B cell (primary cell): ENCODE measurements at regions of chr5 and their contacts with region 1.

Region 1: GRCh38 chr5:180470966-180471582 is 23.1 kb upstream of the CNOT6 start:
- DNase-seq: peak; percentile 72
- ATAC-seq: peak; percentile 83
- H3K4me3 ChIP-seq: no peak overlapping the region
- H3K4me3 Mint-ChIP-seq: no peak overlapping the region
- H3K27ac ChIP-seq: no peak overlapping the region
- H3K27ac Mint-ChIP-seq: no peak overlapping the region
- H3K4me1 ChIP-seq: peaks cover 0 to 7% of the 10 kb centered on the region in 2 donors
- H3K4me1 Mint-ChIP-seq: no peaks in the 10 kb centered on the region
- H3K27me3 ChIP-seq: peaks cover 0 to 11% (median 3%) of the 10 kb centered on the region in 4 experiments
- H3K27me3 Mint-ChIP-seq: peaks cover 10% of the 10 kb centered on the region
- CTCF ChIP-seq: peak; percentile 94

Region 2: GRCh38 chr5:179526978-179527377 is 944.1 kb before region 1 on chr5:
- CTCF ChIA-PET with region 1: no interaction called
- POLR2A ChIA-PET with region 1: no interaction called
- intact Hi-C with region 1: no loop called
- DNase-seq: no peak
- ATAC-seq: no peak
- H3K4me3 ChIP-seq: no peak overlapping the region
- H3K4me3 Mint-ChIP-seq: no peak overlapping the region
- H3K27ac ChIP-seq: no peak overlapping the region
- H3K27ac Mint-ChIP-seq: no peak overlapping the region
- H3K4me1 ChIP-seq: peaks cover 0 to 9% of the 10 kb centered on the region in 2 donors
- H3K4me1 Mint-ChIP-seq: peaks cover 19% of the 10 kb centered on the region
- H3K27me3 ChIP-seq: no peaks in the 10 kb centered on the region
- H3K27me3 Mint-ChIP-seq: no peaks in the 10 kb centered on the region
- CTCF ChIP-seq: no peak

Region 3: GRCh38 chr5:180233729-180234128 is 237.3 kb before region 1 on chr5:
- CTCF ChIA-PET with region 1: no interaction called
- POLR2A ChIA-PET with region 1: no interaction called
- intact Hi-C with region 1: no loop called
- DNase-seq: no peak
- ATAC-seq: no peak
- H3K4me3 ChIP-seq: no peak overlapping the region
- H3K4me3 Mint-ChIP-seq: no peak overlapping the region
- H3K27ac ChIP-seq: no peak overlapping the region
- H3K27ac Mint-ChIP-seq: no peak overlapping the region
- H3K4me1 ChIP-seq: no peaks in the 10 kb centered on the region
- H3K4me1 Mint-ChIP-seq: no peaks in the 10 kb centered on the region
- H3K27me3 ChIP-seq: no peaks in the 10 kb centered on the region
- H3K27me3 Mint-ChIP-seq: no peaks in the 10 kb centered on the region
- CTCF ChIP-seq: no peak

Region 4: GRCh38 chr5:180460834-180461233 is 10.2 kb before region 1 on chr5:
- CTCF ChIA-PET with region 1: interaction called, 14 read pairs
- POLR2A ChIA-PET with region 1: no interaction called
- intact Hi-C with region 1: no loop called
- DNase-seq: no peak
- ATAC-seq: no peak
- H3K4me3 ChIP-seq: no peak overlapping the region
- H3K4me3 Mint-ChIP-seq: no peak overlapping the region
- H3K27ac ChIP-seq: no peak overlapping the region
- H3K27ac Mint-ChIP-seq: no peak overlapping the region
- H3K4me1 ChIP-seq: no peaks in the 10 kb centered on the region
- H3K4me1 Mint-ChIP-seq: no peaks in the 10 kb centered on the region
- H3K27me3 ChIP-seq: no peaks in the 10 kb centered on the region
- H3K27me3 Mint-ChIP-seq: peaks cover 5% of the 10 kb centered on the region
- CTCF ChIP-seq: no peak

Region 5: GRCh38 chr5:180484813-180485212 is 13.7 kb after region 1 on chr5:
- CTCF ChIA-PET with region 1: interaction called, 14 read pairs
- POLR2A ChIA-PET with region 1: no interaction called
- intact Hi-C with region 1: no loop called
- DNase-seq: no peak
- ATAC-seq: no peak
- H3K4me3 ChIP-seq: no peak overlapping the region
- H3K4me3 Mint-ChIP-seq: no peak overlapping the region
- H3K27ac ChIP-seq: no peak overlapping the region
- H3K27ac Mint-ChIP-seq: no peak overlapping the region
- H3K4me1 ChIP-seq: no peaks in the 10 kb centered on the region
- H3K4me1 Mint-ChIP-seq: no peaks in the 10 kb centered on the region
- H3K27me3 ChIP-seq: no peaks in the 10 kb centered on the region
- H3K27me3 Mint-ChIP-seq: no peaks in the 10 kb centered on the region
- CTCF ChIP-seq: no peak

Region 6: GRCh38 chr5:180935203-180935602 is 464.1 kb after region 1 on chr5:
- CTCF ChIA-PET with region 1: no interaction called
- POLR2A ChIA-PET with region 1: no interaction called
- intact Hi-C with region 1: no loop called
- DNase-seq: no peak
- ATAC-seq: no peak
- H3K4me3 ChIP-seq: no peak overlapping the region
- H3K4me3 Mint-ChIP-seq: no peak overlapping the region
- H3K27ac ChIP-seq: no peak overlapping the region
- H3K27ac Mint-ChIP-seq: no peak overlapping the region
- H3K4me1 ChIP-seq: no peaks in the 10 kb centered on the region
- H3K4me1 Mint-ChIP-seq: no peaks in the 10 kb centered on the region
- H3K27me3 ChIP-seq: peaks cover 0 to 10% (median 2%) of the 10 kb centered on the region in 4 experiments
- H3K27me3 Mint-ChIP-seq: peaks cover 4% of the 10 kb centered on the region
- CTCF ChIP-seq: no peak